ENCODE measurements at regions of chr2 and their contacts with region 1.

Region 1: DNA sequence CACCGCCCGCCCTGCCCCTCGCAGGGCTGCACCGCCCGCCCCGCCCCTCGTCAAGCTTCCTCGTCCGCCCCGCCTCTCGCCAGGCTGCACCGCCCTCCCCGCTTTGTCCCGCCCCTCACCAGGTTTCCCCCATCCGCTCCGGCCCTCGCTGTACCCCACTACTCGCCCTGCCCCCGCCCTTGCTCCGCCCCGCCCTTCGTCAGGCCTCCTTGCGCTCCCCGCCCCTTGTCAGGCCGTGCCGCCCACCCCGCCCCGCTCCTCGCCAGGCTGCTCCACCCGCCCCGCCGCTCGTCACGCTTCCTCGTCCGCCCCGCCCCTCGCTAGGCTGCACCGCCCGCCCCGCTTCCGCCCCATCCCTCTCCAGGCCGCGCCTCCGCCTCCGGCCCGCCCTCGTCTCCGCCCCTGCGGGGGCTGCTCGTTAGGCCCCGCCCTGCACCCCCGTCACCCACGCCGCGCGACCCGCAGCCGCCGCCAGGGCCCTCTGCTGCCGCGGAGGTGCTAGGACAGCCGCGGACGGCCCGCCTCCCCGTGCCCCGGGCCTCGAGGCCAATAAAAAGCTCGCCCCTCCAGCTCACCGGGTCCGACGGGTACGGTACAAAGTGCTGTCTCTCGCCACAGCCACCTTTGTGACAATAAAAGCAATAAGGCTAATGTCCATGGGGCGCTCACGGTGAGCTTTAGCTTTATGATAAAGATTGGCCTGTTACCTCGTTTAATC is 574 bp upstream of the DNPEP start:
- DNase-seq: peak; percentile 99 to 100
- ATAC-seq: peak; percentile 94
- H3K4me3 ChIP-seq: no peak overlapping the region
- H3K27ac ChIP-seq: peak overlapping the region in 1 of 2 donors; percentile 7
- H3K4me1 ChIP-seq: no peaks in the 10 kb centered on the region
- H3K27me3 ChIP-seq: no peaks in the 10 kb centered on the region

Region 2: DNA sequence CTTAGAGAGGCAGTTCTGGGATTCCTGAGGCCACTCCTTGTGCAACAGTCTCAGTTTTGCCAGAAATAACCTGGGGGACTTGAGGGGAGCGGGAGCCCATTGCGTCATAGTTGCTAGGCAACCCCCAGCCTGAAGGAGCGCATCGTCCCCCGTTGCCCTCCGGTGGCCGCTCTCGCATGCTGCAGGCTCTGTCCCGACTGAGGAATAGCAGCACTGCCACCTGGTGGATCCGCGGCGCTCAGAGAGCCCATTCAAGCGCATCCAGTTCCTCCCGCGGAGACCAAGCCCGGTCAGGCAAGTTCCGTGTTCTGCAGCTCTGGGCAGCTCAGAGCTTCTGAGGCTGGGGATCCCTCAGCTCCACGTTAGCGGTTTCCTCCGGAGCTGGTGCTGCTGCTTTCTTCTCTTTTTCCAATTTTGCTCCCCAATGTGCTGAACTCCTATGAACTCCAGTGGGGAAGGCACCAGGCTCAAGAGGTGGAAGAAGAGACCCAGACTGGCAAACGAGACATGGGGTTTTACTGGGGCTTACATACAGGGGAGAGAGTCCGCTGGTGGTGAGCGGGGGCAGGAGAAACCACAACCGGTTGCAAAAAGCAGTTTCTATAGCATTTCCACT is 254.3 kb after region 1 on chr2:
- intact Hi-C with region 1: loop called in 1 of 2 experiments (anchors 5 kb)
- DNase-seq: peak; percentile 97 to 99
- ATAC-seq: peak; percentile 95
- H3K4me3 ChIP-seq: no peak overlapping the region
- H3K27ac ChIP-seq: no peak overlapping the region
- H3K4me1 ChIP-seq: no peaks in the 10 kb centered on the region
- H3K27me3 ChIP-seq: no peaks in the 10 kb centered on the region

Measured in aorta (tissue), 5 donors.